ENCODE measurements at regions of chr10 and their contacts with region 1.

Region 1: DNA sequence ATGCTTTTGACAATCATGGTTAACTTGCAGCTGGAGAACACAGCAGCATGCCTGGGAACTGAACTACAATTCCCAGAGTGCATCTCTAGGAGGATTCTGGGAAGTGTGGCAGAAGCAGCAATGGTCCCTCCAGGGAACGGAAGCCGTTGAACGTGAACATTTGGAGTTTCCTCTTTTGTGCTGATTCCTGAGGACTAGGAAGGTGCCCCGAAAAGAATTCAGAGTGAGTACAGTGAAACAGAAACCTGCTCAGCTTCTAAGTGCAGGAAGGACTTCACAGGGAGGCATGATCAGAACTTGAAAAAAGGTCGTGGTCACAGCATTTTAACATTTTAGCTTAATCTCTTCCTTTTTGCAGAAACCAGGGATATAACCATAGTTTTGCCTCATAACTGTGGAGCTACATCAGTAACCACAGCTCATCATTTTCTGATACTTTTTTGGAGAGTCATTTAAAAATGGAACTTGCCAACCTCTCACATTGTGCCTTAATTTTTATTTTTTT is at the start of gene NUDT13:
- DNase-seq: peak; percentile 22
- H3K4me3 Mint-ChIP-seq: peak within 1 kb of the TSS; percentile 76
- H3K27ac Mint-ChIP-seq: peak within 1 kb of the TSS; percentile 88
- H3K4me1 Mint-ChIP-seq: peaks cover 10% of the 10 kb centered on the region
- H3K27me3 Mint-ChIP-seq: no peaks in the 10 kb centered on the region
- total RNA-seq, gene NUDT13: 0.76 and 1.0 TPM in 2 replicates

Region 2: GRCh38 chr10:73096449-73097304 is 13.7 kb before region 1 on chr10 and contains the start of gene P4HA1:
- intact Hi-C with region 1: loop called (anchors 1 kb)
- DNase-seq: peak; percentile 97
- H3K4me3 Mint-ChIP-seq: peak within 1 kb of the TSS; percentile 89
- H3K27ac Mint-ChIP-seq: peak within 1 kb of the TSS; percentile 90
- H3K4me1 Mint-ChIP-seq: peaks cover 31% of the 10 kb centered on the region
- H3K27me3 Mint-ChIP-seq: no peaks in the 10 kb centered on the region
- total RNA-seq, gene P4HA1: 71.9 and 72.8 TPM in 2 replicates

Region 3: GRCh38 chr10:73448384-73448783 is 338.0 kb after region 1 on chr10:
- intact Hi-C with region 1: no loop called
- DNase-seq: no peak
- H3K4me3 Mint-ChIP-seq: no peak overlapping the region
- H3K27ac Mint-ChIP-seq: no peak overlapping the region
- H3K4me1 Mint-ChIP-seq: peaks cover 1% of the 10 kb centered on the region
- H3K27me3 Mint-ChIP-seq: no peaks in the 10 kb centered on the region